ENCODE measurements at regions of chr21 and their contacts with region 1.

Region 1: DNA sequence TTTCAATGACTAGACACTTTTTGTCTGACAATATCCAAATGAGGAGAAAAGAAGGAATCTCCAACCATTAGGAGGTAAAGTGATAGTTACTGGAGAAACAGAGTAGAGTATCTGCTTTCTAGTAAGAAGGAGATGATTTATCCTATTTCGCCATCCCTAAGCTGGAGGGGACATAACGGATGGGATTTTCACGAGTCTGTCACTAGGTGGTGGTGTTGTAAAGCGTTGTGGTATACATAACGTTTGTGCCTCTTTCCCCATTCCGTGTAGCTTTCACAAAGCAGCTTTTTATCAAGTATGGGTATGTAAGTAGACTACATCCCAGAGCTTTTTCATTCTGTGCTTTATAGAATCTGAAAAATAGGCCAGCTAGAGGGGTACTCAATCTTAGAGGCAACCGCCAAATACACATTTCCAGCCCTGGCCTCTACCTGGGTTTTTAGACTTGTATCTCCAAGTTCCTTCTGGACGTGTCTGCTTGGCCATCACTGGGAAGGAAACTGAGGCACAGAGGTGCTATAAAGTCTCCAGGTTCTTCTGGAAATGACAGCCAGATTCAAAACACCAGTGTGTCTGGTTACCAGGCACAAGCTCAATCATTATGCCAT is 33.3 kb upstream of the FAM3B start:
- DNase-seq: peak; percentile 45
- ATAC-seq: peak; percentile 93
- H3K4me3 Mint-ChIP-seq: no peak overlapping the region
- H3K27ac Mint-ChIP-seq: no peak overlapping the region
- H3K4me1 Mint-ChIP-seq: no peaks in the 10 kb centered on the region
- H3K27me3 Mint-ChIP-seq: peaks cover 11% of the 10 kb centered on the region
- CTCF ChIP-seq: peak; percentile 86

Region 2: GRCh38 chr21:41152147-41152546 is 131.2 kb before region 1 on chr21:
- CTCF ChIA-PET with region 1: no interaction called
- POLR2A ChIA-PET with region 1: no interaction called
- intact Hi-C with region 1: no loop called
- DNase-seq: no peak
- ATAC-seq: no peak
- H3K4me3 Mint-ChIP-seq: no peak overlapping the region
- H3K27ac Mint-ChIP-seq: no peak overlapping the region
- H3K4me1 Mint-ChIP-seq: no peaks in the 10 kb centered on the region
- H3K27me3 Mint-ChIP-seq: peaks cover 19% of the 10 kb centered on the region
- CTCF ChIP-seq: no peak

Region 3: DNA sequence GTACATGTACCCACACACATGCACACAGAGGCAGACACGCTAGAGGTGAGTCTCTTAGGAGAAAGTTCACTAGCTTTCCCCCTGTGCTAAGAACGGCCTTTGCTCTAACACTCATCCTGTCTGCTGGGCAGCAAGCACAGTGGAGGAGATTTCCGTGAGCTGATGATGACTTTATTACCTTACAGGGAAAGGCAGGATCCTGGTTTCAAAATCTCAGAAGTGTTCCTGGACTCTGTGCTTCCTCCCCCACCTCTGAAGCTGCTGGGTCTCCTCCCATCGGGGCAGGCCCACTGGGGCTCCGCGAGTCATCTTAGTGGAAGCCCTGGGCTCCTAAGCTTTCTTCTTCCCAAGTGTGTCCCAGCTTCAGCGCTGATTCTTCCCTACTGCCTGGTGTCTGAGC is 36.0 kb after region 1 on chr21:
- CTCF ChIA-PET with region 1: interaction called, 10 read pairs
- POLR2A ChIA-PET with region 1: no interaction called
- intact Hi-C with region 1: no loop called
- DNase-seq: no peak
- ATAC-seq: no peak
- H3K4me3 Mint-ChIP-seq: no peak overlapping the region
- H3K27ac Mint-ChIP-seq: no peak overlapping the region
- H3K4me1 Mint-ChIP-seq: peaks cover 13% of the 10 kb centered on the region
- H3K27me3 Mint-ChIP-seq: peaks cover 26% of the 10 kb centered on the region
- CTCF ChIP-seq: no peak

Region 4: DNA sequence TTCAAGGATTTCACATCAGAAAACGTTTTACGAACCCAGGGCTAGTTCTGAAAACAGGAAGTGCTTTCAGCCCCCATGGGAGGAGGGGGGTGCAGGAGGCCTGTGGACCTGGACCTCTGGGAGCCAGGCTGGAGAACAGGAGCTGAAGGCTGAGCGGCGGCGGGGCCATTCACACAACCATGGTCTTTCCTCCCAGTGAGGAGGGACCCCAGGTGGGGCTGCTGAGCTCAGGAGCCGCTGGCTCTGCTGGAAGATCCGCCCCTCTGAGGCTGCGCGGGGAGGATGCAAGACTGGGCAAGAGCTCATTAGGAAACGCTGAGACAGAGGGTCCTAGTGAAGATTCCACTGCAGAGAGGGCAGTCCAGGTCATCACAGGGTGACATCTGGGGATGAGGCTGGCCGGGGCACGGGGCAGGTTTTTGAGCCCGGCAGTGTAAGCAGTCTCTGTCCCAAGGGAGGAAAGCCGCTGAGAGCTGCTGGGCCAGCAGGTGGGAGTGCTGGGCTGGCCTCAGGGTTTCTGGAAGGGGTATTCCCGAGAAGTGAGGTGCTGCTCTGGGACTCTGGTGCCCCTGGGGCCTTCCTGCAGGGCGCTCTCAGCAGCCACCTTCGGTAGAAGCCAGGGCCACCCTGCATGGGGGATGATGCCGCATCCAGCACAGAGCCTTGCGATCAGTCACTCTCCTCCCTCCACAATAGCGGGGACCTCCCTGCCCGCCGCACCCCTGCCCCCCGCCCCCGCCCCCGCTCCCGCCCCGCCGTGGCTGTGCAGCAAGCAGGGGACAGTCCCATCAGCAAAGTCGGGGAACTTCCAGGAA is 86.0 kb after region 1 on chr21:
- CTCF ChIA-PET with region 1: interaction called, 12 read pairs
- POLR2A ChIA-PET with region 1: no interaction called
- intact Hi-C with region 1: no loop called
- DNase-seq: peak; percentile 55
- ATAC-seq: peak; percentile 84
- H3K4me3 Mint-ChIP-seq: peak overlapping the region; percentile 70
- H3K27ac Mint-ChIP-seq: peak overlapping the region; percentile 92
- H3K4me1 Mint-ChIP-seq: peaks cover 65% of the 10 kb centered on the region
- H3K27me3 Mint-ChIP-seq: no peaks in the 10 kb centered on the region
- CTCF ChIP-seq: peak; percentile 11

Region 5: GRCh38 chr21:41396506-41397075 is 113.3 kb after region 1 on chr21:
- CTCF ChIA-PET with region 1: no interaction called
- POLR2A ChIA-PET with region 1: no interaction called
- intact Hi-C with region 1: no loop called
- DNase-seq: no peak
- ATAC-seq: no peak
- H3K4me3 Mint-ChIP-seq: no peak overlapping the region
- H3K27ac Mint-ChIP-seq: no peak overlapping the region
- H3K4me1 Mint-ChIP-seq: no peaks in the 10 kb centered on the region
- H3K27me3 Mint-ChIP-seq: no peaks in the 10 kb centered on the region
- CTCF ChIP-seq: no peak

Region 6: DNA sequence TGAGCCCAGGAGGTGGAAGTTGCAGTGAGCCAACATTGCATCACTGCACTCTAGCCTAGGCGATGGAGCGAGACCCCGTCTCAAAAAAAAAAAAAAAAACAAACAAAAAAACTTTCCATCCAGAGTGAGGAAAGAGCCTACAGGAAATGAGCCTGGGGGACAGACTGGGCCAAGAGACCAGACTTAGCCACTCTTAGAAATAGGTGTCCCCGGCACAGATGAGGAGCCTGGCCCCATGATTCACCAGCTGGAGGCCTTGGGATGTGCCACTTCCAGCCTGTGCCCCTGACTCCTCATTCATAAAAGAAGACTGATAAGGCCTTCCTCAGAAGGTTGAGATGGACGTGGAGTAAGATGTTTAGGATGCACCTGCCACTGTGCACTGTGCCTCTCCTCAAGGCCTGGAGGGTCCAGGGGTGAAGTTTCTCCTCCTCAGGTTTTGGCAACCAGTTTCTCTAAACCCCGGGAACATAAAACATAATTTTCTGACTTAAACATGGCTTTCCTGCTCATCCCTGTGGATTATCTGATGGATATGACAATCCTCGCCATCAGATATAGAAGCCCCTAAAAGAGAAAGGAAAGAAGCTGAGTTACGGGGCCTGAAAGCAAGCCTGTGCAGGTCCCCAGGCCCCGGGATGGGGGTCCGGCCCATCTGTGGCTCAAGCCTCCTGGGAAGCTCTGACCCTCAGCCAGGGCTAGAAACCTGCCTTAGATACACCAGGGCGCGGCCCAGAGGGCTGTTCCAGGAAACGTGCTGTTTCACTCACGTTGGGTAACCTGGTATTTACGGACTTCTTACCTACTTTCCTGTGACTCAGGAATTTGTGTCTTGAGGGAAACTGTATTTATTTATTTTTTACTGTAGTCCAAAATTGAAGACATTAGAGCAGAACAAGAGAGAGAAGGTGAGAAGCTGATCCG is 168.7 kb after region 1 on chr21:
- CTCF ChIA-PET with region 1: interaction called, 32 read pairs
- POLR2A ChIA-PET with region 1: no interaction called
- intact Hi-C with region 1: no loop called
- DNase-seq: no peak
- ATAC-seq: no peak
- H3K4me3 Mint-ChIP-seq: no peak overlapping the region
- H3K27ac Mint-ChIP-seq: no peak overlapping the region
- H3K4me1 Mint-ChIP-seq: no peaks in the 10 kb centered on the region
- H3K27me3 Mint-ChIP-seq: no peaks in the 10 kb centered on the region
- CTCF ChIP-seq: no peak

Region 7: GRCh38 chr21:41460578-41461527 is 177.5 kb after region 1 on chr21:
- CTCF ChIA-PET with region 1: interaction called, 32 read pairs
- POLR2A ChIA-PET with region 1: no interaction called
- intact Hi-C with region 1: loop called (anchors 1 kb)
- DNase-seq: peak; percentile 64
- ATAC-seq: peak; percentile 85
- H3K4me3 Mint-ChIP-seq: no peak overlapping the region
- H3K27ac Mint-ChIP-seq: no peak overlapping the region
- H3K4me1 Mint-ChIP-seq: no peaks in the 10 kb centered on the region
- H3K27me3 Mint-ChIP-seq: no peaks in the 10 kb centered on the region
- CTCF ChIP-seq: peak; percentile 76

Region 8: GRCh38 chr21:42117229-42117966 is 834.1 kb after region 1 on chr21:
- CTCF ChIA-PET with region 1: interaction called, 13 read pairs
- POLR2A ChIA-PET with region 1: no interaction called
- intact Hi-C with region 1: no loop called
- DNase-seq: peak; percentile 86
- ATAC-seq: peak; percentile 91
- H3K4me3 Mint-ChIP-seq: peak overlapping the region; percentile 40
- H3K27ac Mint-ChIP-seq: peak overlapping the region; percentile 30
- H3K4me1 Mint-ChIP-seq: peaks cover 25% of the 10 kb centered on the region
- H3K27me3 Mint-ChIP-seq: peaks cover 53% of the 10 kb centered on the region
- CTCF ChIP-seq: peak; percentile 97